GM13976 (cell line): ENCODE measurements at regions of chr2 and their contacts with region 1.

Region 1: DNA sequence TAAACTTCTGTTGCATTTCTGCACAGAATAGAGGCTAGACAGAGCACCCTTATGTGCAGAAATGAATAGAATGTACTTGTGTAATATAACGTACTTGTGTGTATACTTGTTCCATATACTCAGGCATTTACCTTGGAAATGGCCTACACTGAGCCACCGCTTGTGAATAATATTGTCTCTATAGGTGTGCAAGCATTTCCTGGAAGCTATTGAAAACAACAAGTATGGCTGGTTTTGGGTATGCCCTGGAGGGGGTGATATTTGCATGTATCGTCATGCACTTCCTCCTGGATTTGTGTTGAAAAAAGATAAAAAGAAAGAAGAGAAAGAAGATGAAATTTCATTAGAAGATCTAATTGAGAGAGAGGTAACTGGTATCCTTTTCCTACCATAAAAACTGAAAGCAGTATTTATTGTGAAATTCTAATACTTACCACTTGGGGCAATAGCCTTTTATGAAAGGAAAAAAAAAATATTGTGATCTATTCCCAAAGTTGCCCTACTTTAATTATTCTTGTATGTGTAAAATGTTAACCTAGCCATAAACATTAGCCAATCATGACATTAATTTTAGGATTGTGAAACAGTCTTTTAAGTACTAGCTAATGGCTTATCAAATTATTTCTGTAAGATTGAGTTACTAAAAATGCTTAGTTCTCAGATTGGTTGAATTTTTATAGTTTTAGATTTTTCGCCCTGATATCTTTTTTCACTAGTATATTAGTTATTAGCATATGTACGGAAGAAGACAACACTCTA is 18.0 kb downstream of the ZC3H15 start:
- DNase-seq: no peak
- CTCF ChIP-seq: peak; percentile 13

Region 2: DNA sequence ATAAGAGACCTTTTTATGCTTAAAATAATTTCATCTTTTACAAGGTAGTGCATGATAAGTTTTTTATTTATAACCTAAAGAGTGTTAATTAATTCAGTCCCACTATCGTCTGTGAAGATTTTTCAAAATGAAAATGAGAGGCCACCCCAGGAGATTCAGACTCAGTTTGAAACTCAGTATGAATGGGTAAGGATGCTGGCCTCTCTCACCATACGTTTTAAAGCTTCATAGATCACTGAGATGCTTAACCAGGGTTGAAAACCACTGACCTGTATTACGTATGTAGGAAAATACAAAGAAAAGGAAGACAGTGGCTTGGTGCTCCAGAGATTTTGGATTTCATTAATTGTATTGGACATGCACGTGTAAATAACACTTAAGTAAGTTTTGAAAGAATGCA is 486.7 kb before region 1 on chr2:
- in situ Hi-C with region 1: no loop called
- DNase-seq: no peak
- CTCF ChIP-seq: no peak

Region 3: DNA sequence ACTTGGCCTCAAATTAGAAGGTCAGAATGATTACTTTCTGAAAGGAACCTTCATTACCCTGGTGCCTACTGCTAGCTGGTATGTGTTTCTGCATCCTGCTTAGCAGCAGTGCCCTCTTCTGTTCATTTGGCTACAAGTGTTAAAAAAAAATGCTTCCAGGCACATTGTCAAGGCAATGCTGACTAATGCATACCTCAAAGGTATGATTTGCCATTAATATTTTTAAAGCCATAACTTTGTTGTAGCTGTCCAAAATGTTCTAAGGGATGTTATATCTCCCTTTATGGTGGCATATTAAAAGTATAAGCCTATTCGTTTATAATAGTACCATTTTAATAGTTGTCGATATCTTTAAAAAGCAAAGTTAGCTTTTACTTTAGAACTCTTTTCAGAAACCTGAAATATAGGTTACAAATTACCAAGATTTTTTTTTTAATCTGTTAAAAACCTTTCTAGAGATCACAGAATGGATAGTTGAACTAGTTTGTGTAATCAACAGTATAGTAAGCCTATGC is 137.8 kb after region 1 on chr2:
- in situ Hi-C with region 1: loop called (anchors 10 kb)
- DNase-seq: peak; percentile 49
- CTCF ChIP-seq: peak; percentile 66